A549 (cell line): ENCODE measurements at regions of chr1 and their contacts with region 1.

Region 1: GRCh38 chr1:21721295-21721985 is 52.3 kb upstream of the RAP1GAP start:
- DNase-seq: no peak
- ATAC-seq: no peak
- H3K4me3 ChIP-seq: no peak overlapping the region
- H3K27ac ChIP-seq: peak overlapping the region in 1 of 2 experiments; percentile 1; a peak in 1 of 6 replicates
- H3K4me1 ChIP-seq: peaks cover 6% of the 10 kb centered on the region; the same call in 1 of the 3 replicates
- CTCF ChIP-seq: no peak
- EP300 ChIP-seq: no peak
- POLR2A ChIP-seq: no peak
- RAD21 ChIP-seq: no peak

Region 2: GRCh38 chr1:21703318-21703963 is 18.0 kb before region 1 on chr1:
- CTCF ChIA-PET with region 1: interaction called, 10 read pairs
- POLR2A ChIA-PET with region 1: no interaction called
- DNase-seq: peak; percentile 18 to 57
- ATAC-seq: peak; percentile 89
- H3K4me3 ChIP-seq: no peak overlapping the region
- H3K27ac ChIP-seq: peak overlapping the region in 1 of 2 experiments; percentile 52; a peak in 2 of 6 replicates
- H3K4me1 ChIP-seq: peaks cover 10% of the 10 kb centered on the region; the same call in 2 of the 3 replicates
- CTCF ChIP-seq: peak; percentile 49
- EP300 ChIP-seq: no peak
- POLR2A ChIP-seq: no peak
- RAD21 ChIP-seq: peak; percentile 43 to 52; a peak in 4 of 5 replicates

Region 3: DNA sequence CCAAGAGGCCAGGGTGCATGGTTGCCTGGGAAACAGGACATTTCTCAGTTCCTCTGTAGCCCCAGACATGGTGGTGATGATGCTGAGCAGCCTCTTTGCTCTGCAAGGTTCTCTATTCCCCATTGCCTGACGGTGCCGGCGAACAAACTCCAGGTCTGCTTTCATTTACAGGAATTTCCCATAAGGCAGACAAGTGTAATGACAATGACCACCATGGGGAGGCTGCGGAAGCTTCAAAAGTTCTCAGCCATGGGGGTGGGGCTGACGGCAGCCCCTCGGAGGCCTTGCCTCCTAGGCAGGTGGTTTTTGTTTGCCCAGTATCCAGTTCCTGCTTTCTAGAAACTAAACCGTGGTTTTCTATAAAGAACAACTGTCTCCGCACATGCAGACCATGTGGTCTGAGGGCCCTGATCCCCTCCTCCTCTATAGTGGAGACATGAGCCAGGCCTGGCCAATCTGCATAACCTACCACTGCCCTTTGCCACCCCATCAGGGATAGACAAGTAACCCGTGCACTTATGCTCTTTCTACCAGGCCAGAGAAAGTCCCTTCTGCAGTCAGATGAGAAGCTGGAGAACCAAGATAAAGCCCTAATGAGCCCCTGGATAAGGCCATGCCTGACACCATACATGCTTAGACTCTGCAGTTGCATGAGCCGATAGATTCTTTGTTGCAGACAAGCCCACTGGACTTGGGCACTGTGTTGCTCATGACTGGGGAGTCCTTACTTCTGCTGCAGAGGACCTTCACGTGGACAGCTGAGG is 144.7 kb after region 1 on chr1:
- CTCF ChIA-PET with region 1: no interaction called
- POLR2A ChIA-PET with region 1: no interaction called
- DNase-seq: no peak
- ATAC-seq: no peak
- H3K4me3 ChIP-seq: no peak overlapping the region
- H3K27ac ChIP-seq: no peak overlapping the region
- H3K4me1 ChIP-seq: peaks cover 34% of the 10 kb centered on the region
- CTCF ChIP-seq: no peak
- EP300 ChIP-seq: no peak
- POLR2A ChIP-seq: no peak
- RAD21 ChIP-seq: no peak